ENCODE measurements at regions of chr1 and their contacts with region 1.

Region 1: DNA sequence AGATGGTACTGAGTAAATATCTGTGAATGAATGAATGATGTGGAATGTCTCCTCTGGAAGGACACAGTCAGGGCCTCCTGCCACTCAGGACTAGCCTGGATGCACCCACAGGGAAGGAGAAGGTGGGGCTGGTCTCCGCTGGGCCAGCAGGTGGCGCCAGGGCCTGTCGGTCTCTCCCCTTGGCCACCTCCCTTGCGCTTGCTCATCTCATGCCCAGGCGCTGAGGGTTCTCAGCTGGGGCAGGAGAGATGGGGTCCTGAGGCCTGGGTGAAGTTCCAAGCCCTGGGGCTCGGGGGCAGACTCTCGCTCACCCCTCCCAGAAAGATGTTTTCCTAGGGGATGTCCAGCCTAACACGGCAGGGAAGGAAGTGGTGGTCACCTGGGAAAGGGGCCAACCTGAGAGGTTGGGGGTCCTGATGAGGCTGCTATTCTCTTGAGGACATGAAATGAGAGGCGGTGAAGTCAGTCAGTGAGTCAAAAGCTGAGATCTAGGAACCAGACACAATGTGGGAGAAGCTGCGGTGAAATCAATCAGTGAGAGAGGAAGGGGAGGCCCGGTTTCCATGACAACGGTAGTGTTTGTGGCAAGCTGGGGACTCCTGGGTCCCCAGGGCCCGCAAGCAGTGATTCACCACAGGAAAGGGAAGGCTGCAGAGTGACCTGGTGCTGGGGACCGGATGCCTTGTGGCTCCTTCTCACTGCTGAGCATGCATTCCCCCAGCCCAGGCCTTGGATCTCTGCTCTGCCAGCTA is 14.6 kb upstream of the MEX3A start:
- DNase-seq: peak; percentile 97
- H3K4me3 Mint-ChIP-seq: peak overlapping the region; percentile 64
- H3K27ac Mint-ChIP-seq: peak overlapping the region; percentile 96
- H3K4me1 Mint-ChIP-seq: peaks cover 56% of the 10 kb centered on the region
- H3K27me3 Mint-ChIP-seq: peaks cover 11% of the 10 kb centered on the region

Region 2: DNA sequence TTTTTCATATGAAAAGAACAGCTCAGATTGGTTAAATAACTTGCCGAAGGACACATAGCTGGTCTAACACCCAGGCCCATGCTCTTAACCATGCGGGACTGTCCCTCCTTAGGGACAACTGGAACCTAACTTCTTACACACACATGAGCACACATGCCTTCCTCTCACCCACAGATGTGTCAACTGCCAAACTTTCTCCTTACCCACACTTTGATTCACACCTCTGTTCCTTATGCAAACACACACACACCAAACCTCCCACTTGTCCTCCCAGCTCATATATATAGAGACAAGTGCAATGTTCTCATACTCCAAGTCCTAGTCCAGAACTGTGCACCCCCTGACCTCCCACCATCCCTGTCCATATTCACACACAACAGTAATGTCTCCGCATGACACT is 31.6 kb before region 1 on chr1:
- CTCF ChIA-PET with region 1: interaction called, 13 read pairs
- POLR2A ChIA-PET with region 1: no interaction called
- intact Hi-C with region 1: no loop called
- DNase-seq: no peak
- H3K4me3 Mint-ChIP-seq: no peak overlapping the region
- H3K27ac Mint-ChIP-seq: no peak overlapping the region
- H3K4me1 Mint-ChIP-seq: peaks cover 20% of the 10 kb centered on the region
- H3K27me3 Mint-ChIP-seq: no peaks in the 10 kb centered on the region

Region 3: DNA sequence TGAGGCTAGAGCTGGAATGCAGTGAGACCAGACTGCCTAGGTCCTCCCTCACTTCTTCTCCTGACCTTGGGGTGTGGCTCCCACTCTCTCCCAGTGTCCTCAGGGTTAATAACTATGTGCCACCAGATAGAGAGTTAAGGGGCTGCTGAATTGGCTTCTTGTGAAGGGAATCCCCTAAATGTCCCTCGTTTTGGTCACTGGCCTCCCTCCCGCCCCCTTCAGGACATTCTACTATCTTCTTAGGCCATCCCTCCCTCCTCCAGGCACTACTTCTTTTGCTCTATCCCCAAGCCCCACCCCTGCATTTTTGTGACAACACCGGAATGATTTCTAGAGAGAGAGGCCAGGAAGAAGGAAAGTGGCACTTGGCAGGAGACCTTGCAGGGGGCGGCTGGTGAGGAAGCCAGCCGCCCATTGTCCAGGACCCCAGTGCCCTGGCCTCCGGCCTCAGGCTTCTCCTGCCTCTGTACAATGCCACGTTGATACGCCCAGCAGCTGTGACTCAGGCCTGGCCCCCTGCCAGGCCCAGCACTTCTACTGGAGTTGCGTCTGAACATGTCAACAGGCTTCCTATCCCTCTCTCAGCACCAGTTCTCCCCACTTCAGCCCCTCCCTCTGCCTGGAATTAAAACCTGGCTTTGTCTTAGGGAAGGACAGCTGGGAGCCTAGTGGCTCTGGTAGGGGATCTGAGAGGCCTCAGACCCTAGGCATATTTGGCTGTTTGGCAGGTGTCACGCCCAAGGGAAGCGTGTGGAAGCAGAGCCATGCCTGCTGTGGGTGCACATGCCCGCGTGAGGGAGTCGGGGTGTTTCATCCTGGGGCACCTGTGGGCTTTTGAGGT is 26.8 kb after region 1 on chr1:
- CTCF ChIA-PET with region 1: interaction called, 1,097 read pairs
- POLR2A ChIA-PET with region 1: interaction called, 180 read pairs
- intact Hi-C with region 1: loop called (anchors 1 kb)
- DNase-seq: peak; percentile 85
- H3K4me3 Mint-ChIP-seq: peak overlapping the region; percentile 56
- H3K27ac Mint-ChIP-seq: peak overlapping the region; percentile 66
- H3K4me1 Mint-ChIP-seq: peaks cover 79% of the 10 kb centered on the region
- H3K27me3 Mint-ChIP-seq: no peaks in the 10 kb centered on the region

Region 4: DNA sequence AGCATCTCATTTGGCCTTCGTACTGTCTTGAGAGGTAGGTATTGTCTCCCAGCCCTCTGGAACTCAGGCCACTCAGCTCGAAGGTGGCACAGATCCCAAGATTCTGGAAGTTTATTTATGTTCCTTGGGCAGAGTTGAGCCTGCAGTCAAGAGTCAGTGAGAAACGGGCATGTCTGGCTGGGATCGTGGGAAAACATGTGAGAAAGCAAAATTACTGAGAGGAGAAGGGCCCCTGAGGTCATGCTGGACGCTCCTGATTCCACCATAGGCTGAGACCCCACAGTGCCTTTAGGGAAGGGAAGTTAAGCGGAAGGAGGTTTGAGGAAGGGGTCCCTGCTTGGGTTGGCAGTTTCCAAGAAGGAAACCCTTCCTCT is 44.0 kb after region 1 on chr1:
- CTCF ChIA-PET with region 1: interaction called, 1,097 read pairs
- POLR2A ChIA-PET with region 1: no interaction called
- intact Hi-C with region 1: no loop called
- DNase-seq: no peak
- H3K4me3 Mint-ChIP-seq: no peak overlapping the region
- H3K27ac Mint-ChIP-seq: no peak overlapping the region
- H3K4me1 Mint-ChIP-seq: peaks cover 4% of the 10 kb centered on the region
- H3K27me3 Mint-ChIP-seq: no peaks in the 10 kb centered on the region

Region 5: GRCh38 chr1:156160743-156161171 is 63.9 kb after region 1 on chr1:
- CTCF ChIA-PET with region 1: interaction called, 12 read pairs
- POLR2A ChIA-PET with region 1: interaction called, 5 read pairs
- intact Hi-C with region 1: no loop called
- DNase-seq: peak; percentile 90
- H3K4me3 Mint-ChIP-seq: peak overlapping the region; percentile 74
- H3K27ac Mint-ChIP-seq: peak overlapping the region; percentile 93
- H3K4me1 Mint-ChIP-seq: peaks cover 82% of the 10 kb centered on the region
- H3K27me3 Mint-ChIP-seq: no peaks in the 10 kb centered on the region

Region 6: DNA sequence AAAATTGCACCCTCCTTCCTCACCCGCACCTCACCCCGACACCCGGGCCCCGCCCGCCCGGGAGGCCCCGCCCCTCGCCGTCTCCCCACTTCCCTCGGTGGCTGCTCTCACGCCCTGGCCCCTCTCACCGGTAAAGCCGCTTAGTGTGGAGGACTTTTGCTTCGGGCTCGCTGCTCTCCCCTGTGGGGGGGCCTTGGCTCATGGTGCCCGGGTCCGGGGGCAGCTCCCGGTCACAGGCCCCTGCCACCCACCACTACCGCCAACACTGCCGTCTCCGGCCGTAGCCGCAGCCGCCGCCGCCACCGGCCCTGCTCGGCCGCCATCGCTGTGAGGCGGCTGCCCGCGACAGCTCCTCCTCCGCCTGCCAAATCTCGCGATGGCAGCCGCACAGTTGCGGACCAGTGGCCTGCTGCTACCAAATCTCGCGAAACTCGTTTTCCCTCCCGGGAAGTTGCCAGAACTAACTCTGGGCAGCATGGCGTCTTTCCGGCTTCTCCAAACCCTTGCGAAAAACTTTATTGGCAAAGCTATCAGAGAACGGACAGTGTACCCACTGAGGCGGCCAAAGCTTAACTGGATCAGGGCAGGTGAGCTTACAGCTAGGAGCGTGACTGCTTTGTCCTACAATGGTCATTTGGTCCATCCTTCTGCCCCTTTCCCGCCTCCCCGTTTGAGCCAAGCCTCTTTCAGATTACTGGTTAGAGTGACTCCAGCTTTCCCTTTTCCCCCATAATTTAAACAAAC is 185.8 kb after region 1 on chr1 and contains the start of gene SMG5:
- CTCF ChIA-PET with region 1: interaction called, 4 read pairs
- POLR2A ChIA-PET with region 1: interaction called, 12 read pairs
- intact Hi-C with region 1: loop called (anchors 5 kb)
- DNase-seq: peak; percentile 98
- H3K4me3 Mint-ChIP-seq: peak within 1 kb of the TSS; percentile 95
- H3K27ac Mint-ChIP-seq: peak within 1 kb of the TSS; percentile 95
- H3K4me1 Mint-ChIP-seq: peaks cover 38% of the 10 kb centered on the region
- H3K27me3 Mint-ChIP-seq: no peaks in the 10 kb centered on the region
- total RNA-seq, gene SMG5: 65.1 to 68.0 TPM

Region 7: DNA sequence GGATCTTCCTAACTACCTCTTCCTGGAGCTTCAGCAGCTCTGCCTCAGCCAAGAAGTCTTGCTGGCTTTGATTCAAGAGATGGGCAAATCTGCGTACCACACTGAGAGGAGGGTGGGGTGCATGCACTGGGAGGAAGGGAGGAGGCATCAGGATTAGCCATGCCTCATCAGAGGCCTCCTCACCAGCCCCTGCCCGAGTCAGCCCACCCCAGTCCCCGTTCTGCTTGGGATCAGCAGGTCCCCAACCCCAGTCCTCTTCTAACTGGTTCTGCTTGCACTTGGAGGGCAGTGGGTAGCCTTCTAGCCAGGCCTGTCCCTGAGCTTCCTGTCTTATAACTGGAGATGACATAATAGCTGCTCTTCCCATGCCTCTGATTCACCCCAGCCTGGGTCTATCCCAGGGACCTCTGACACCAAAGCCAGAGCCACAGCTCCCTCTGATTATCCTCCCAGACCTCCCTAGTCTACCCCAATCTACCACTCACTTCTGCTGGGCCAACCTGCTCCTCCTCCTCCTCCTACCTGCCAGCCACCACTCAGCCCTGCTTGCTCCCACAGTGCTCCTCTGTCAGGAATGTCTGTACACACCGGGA is 444.1 kb after region 1 on chr1:
- CTCF ChIA-PET with region 1: no interaction called
- POLR2A ChIA-PET with region 1: no interaction called
- intact Hi-C with region 1: no loop called
- DNase-seq: no peak
- H3K4me3 Mint-ChIP-seq: no peak overlapping the region
- H3K27ac Mint-ChIP-seq: no peak overlapping the region
- H3K4me1 Mint-ChIP-seq: no peaks in the 10 kb centered on the region
- H3K27me3 Mint-ChIP-seq: no peaks in the 10 kb centered on the region